Right lobe of liver (tissue), 6 donors: ENCODE measurements at regions of chr1 and their contacts with region 1.

Region 1: GRCh38 chr1:64898107-64898845 is 68.1 kb downstream of the JAK1 start:
- DNase-seq: peak; percentile 59 to 82 (median 68)
- ATAC-seq: peak; percentile 95 to 97 (median 96)
- H3K4me3 ChIP-seq: no peak overlapping the region
- H3K27ac ChIP-seq: peak overlapping the region; percentile 54 to 91 (median 61)
- H3K4me1 ChIP-seq: peaks cover 0 to 24% (median 7%) of the 10 kb centered on the region in 4 donors
- H3K27me3 ChIP-seq: no peaks in the 10 kb centered on the region
- CTCF ChIP-seq: no peak
- POLR2A ChIP-seq: no peak

Region 2: GRCh38 chr1:64616039-64616438 is 282.2 kb before region 1 on chr1:
- intact Hi-C with region 1: no loop called
- DNase-seq: no peak
- ATAC-seq: no peak
- H3K4me3 ChIP-seq: no peak overlapping the region
- H3K27ac ChIP-seq: no peak overlapping the region
- H3K4me1 ChIP-seq: no peaks in the 10 kb centered on the region
- H3K27me3 ChIP-seq: no peaks in the 10 kb centered on the region
- CTCF ChIP-seq: no peak
- POLR2A ChIP-seq: no peak

Region 3: GRCh38 chr1:64966158-64966971 is 68.1 kb after region 1 on chr1 and contains the start of gene JAK1:
- intact Hi-C with region 1: loop called in 1 of 2 experiments (anchors 10 kb)
- DNase-seq: peak; percentile 92 to 95 (median 93)
- ATAC-seq: peak; percentile 87 to 93 (median 90)
- H3K4me3 ChIP-seq: peak within 1 kb of the TSS; percentile 73 to 96 (median 85)
- H3K27ac ChIP-seq: peak within 1 kb of the TSS; percentile 92 to 99 (median 97)
- H3K4me1 ChIP-seq: peaks cover 0 to 23% (median 5%) of the 10 kb centered on the region in 4 donors
- H3K27me3 ChIP-seq: no peaks in the 10 kb centered on the region
- CTCF ChIP-seq: peak in 1 of 4 donors; percentile 14
- POLR2A ChIP-seq: peak; percentile 97
- total RNA-seq, gene JAK1: 48.0 to 71.6 (median 66.5) TPM